ENCODE measurements at regions of chr9 and their contacts with region 1.

Region 1: DNA sequence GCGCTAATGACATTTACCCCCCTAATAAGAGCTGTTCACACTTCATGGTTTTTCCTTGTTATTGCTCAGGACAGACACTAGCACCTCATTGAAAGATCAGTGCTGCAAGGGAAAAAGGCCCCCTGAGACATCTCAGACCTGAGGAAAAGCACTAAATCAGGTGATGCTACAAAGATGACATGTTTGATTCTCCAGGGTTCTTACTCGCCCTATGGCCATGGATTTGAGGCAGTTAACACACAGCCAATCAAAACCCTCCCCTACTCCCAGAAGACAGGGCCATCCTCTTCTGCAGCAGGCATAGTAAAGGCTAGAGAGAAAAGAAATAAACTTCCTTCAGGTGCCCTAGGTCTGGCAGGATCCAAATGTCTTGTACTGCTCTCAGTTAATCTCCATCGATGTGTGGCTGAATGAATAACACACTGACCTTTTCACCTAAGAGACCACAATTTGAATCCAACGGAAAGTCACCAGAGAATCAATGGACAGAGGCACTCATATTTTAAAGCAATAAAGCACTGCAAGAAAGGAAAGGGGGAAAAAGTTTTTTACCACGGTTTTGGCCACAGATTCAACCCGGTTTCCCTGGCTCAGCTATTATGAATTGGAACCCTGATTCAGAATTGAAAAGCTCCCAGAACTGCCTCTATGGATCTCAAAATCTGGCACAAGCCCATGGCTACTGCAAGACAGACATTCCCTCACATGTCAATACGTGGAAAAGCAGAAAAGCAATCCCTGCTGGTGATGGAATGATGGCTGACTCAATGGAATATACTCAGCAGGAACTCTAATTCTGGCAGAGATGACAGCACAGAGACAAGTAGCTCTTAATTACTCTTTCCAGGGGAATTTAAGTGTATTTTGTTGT is 329.5 kb downstream of the BNC2 start:
- DNase-seq: no peak
- ATAC-seq: no peak
- H3K4me3 ChIP-seq: no peak overlapping the region
- H3K4me3 Mint-ChIP-seq: no peak overlapping the region
- H3K27ac ChIP-seq: no peak overlapping the region
- H3K27ac Mint-ChIP-seq: no peak overlapping the region
- H3K4me1 ChIP-seq: no peaks in the 10 kb centered on the region
- H3K4me1 Mint-ChIP-seq: no peaks in the 10 kb centered on the region
- H3K27me3 ChIP-seq: no peaks in the 10 kb centered on the region
- H3K27me3 Mint-ChIP-seq: no peaks in the 10 kb centered on the region
- CTCF ChIP-seq: no peak

Region 2: DNA sequence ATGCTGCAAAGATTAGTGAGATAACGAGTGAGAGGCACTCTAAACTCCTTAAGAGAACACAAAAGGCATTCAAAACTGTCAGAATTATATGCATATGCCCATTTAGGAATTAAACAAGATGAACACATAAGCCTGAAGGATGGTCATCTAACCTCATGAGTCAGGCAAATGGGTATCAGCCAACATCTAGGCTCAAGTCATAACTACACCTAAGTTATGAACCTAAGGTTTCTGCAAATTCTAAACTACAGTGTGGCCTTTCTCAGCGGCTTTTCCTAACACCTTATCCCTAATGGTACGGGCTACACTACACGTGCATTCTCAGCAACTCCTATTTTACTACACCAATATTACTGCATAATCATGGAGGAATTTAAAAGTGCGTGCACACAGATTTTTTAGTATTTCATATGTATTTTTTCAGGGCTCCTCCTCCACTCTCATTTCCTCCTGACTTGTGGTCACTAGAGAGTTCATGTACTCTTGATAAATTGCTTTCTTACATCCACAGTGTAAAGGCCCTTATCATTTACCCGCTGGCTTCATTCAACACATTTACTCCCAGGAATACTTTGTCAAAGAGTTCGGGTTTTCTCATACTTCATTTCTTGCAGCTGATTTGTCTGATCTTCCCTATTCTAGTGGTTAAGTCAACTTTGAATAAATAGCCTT is 13.0 kb after region 1 on chr9:
- CTCF ChIA-PET with region 1: no interaction called
- POLR2A ChIA-PET with region 1: no interaction called
- intact Hi-C with region 1: no loop called
- DNase-seq: no peak
- ATAC-seq: no peak
- H3K4me3 ChIP-seq: no peak overlapping the region
- H3K4me3 Mint-ChIP-seq: no peak overlapping the region
- H3K27ac ChIP-seq: no peak overlapping the region
- H3K27ac Mint-ChIP-seq: no peak overlapping the region
- H3K4me1 ChIP-seq: no peaks in the 10 kb centered on the region
- H3K4me1 Mint-ChIP-seq: no peaks in the 10 kb centered on the region
- H3K27me3 ChIP-seq: no peaks in the 10 kb centered on the region
- H3K27me3 Mint-ChIP-seq: peaks cover 2% of the 10 kb centered on the region
- CTCF ChIP-seq: no peak

Region 3: GRCh38 chr9:16992138-16992537 is 451.2 kb after region 1 on chr9:
- CTCF ChIA-PET with region 1: no interaction called
- POLR2A ChIA-PET with region 1: no interaction called
- intact Hi-C with region 1: loop called in 1 of 2 experiments (anchors 10 kb)
- DNase-seq: no peak
- ATAC-seq: no peak
- H3K4me3 ChIP-seq: no peak overlapping the region
- H3K4me3 Mint-ChIP-seq: no peak overlapping the region
- H3K27ac ChIP-seq: no peak overlapping the region
- H3K27ac Mint-ChIP-seq: no peak overlapping the region
- H3K4me1 ChIP-seq: no peaks in the 10 kb centered on the region
- H3K4me1 Mint-ChIP-seq: no peaks in the 10 kb centered on the region
- H3K27me3 ChIP-seq: no peaks in the 10 kb centered on the region
- H3K27me3 Mint-ChIP-seq: no peaks in the 10 kb centered on the region
- CTCF ChIP-seq: no peak

Measured in CD8-positive, alpha-beta T cell (primary cell).